HEK293 (cell line): ENCODE measurements at regions of chr11 and their contacts with region 1.

Region 1: DNA sequence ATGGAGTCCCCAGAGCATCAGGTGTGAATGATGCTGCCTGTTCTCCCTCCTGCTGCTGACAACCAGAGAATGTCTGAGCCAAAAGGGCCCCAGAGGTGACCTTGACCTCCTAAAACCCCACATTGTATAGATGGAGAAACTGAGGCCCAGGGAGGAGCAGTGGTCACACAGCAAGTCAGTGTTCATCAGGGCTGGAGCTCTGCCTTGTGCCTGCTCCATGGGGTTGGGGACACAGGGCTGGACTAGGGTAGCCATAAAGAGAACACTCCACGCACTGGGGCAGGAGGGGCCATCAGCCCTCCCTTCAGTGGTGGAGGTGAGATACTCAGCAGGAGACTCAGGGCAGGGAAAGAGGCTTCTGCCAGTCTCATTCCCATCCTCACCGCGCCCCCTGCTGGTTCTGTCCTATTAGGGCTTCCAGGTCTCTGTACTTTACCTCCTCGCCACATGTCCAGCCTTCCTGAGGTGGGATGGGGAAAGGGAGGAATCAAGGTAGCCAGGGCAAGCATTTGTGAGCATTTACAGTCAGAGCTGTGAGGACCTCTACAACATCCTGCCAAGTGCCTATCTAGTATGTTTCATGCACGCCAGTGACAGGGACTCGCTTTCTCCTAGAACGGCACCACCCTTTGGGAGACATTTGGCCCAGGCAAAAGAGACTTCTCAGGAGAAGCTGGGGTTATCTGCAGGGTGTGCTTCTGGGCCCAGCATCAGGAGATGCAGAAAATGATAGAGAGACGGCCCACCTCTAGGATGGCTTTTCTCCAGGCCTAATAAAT is 43.2 kb downstream of the NEU3 start:
- H3K4me3 ChIP-seq: no peak overlapping the region
- H3K27ac ChIP-seq: no peak overlapping the region
- H3K4me1 ChIP-seq: no peaks in the 10 kb centered on the region
- CTCF ChIP-seq: peak; percentile 69

Region 2: GRCh38 chr11:74770456-74770855 is 261.5 kb before region 1 on chr11:
- CTCF ChIA-PET with region 1: no interaction called
- POLR2A ChIA-PET with region 1: no interaction called
- H3K4me3 ChIP-seq: no peak overlapping the region
- H3K27ac ChIP-seq: no peak overlapping the region
- H3K4me1 ChIP-seq: no peaks in the 10 kb centered on the region
- CTCF ChIP-seq: no peak

Region 3: DNA sequence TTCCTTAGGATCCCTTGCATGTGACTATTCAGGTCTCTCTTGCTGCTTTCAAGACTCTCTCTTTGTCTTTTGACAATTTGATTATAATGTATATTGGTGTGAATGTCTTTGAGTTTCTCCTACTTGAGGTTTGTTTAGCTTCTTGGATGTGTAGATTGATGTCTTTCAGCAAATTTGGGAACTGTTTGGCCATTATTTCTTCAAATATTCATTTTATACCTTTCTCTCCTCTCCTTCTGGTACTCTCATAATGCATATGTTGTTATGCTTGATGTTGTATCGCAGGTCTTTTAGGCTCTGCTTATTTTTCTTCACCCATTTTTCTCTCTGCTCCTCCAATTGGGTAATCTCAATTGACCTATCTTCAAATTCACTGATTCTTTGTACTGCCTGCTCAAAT is 20.5 kb after region 1 on chr11:
- CTCF ChIA-PET with region 1: interaction called, 11 read pairs
- POLR2A ChIA-PET with region 1: no interaction called
- H3K4me3 ChIP-seq: no peak overlapping the region
- H3K27ac ChIP-seq: no peak overlapping the region
- H3K4me1 ChIP-seq: no peaks in the 10 kb centered on the region
- CTCF ChIP-seq: no peak